ENCODE measurements at regions of chr1 and their contacts with region 1.

Region 1: DNA sequence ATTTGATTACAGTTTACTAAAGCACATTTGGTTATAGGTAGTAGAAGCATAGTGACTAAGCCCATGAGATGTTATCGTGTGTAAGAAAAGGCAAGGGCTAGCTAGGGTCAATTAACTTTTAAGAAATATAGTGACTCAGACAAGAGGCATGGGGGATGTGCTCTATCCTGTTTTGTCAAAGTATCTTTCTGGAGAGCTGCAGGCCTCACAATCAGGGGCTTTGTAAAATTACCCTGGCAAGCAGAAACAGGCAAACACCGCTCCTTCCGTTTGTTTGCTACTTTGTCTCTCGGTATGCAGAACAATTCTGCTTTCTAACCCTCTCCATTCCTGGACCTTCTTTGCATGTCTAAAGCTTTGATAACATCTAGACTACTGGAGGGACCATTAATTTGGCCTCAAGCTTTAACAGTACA is 26.1 kb upstream of the ZNF697 start:
- DNase-seq: no peak
- H3K4me3 ChIP-seq: no peak overlapping the region
- H3K27ac ChIP-seq: no peak overlapping the region
- H3K4me1 ChIP-seq: peaks cover 3 to 5% of the 10 kb centered on the region in 2 donors
- H3K27me3 ChIP-seq: no peaks in the 10 kb centered on the region
- CTCF ChIP-seq: no peak
- POLR2A ChIP-seq: no peak

Region 2: DNA sequence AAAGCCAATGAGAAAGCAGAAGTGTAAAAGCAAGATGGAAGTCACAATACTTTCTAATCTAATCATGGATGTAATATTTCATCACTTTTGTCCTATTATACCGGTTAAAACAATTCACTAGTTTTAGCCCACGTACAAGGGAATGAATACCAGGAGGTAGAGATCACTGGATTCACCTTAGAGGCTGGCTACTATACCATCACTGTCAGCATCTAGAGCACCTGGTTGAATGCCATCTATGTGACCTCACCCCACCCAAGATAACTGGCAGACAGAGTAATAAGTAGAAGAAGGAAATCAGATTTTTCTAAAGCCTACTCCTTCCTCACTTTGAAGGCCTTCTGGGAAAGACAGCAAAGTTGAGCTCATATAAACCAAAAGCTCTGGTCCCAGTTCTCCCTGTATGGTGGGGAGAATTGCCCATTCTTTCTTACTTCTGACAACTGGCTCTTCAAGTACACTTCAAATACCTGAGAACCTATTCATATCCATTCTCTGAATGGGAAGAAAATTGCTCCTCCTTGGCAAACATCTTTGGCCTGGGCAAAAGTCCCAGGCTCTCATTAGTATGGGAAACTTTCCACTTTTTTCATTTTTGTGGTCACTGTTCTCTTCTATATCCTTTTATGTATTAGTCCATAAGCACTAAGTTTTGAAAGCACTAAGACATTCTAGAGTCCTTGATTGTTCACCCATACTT is 142.3 kb before region 1 on chr1:
- intact Hi-C with region 1: no loop called
- DNase-seq: no peak
- H3K4me3 ChIP-seq: no peak overlapping the region
- H3K27ac ChIP-seq: no peak overlapping the region
- H3K4me1 ChIP-seq: no peaks in the 10 kb centered on the region
- H3K27me3 ChIP-seq: no peaks in the 10 kb centered on the region
- CTCF ChIP-seq: no peak
- POLR2A ChIP-seq: no peak

Region 3: GRCh38 chr1:119605686-119606085 is 68.4 kb before region 1 on chr1:
- intact Hi-C with region 1: no loop called
- DNase-seq: no peak
- H3K4me3 ChIP-seq: no peak overlapping the region
- H3K27ac ChIP-seq: no peak overlapping the region
- H3K4me1 ChIP-seq: peaks cover 4 to 6% of the 10 kb centered on the region in 2 donors
- H3K27me3 ChIP-seq: no peaks in the 10 kb centered on the region
- CTCF ChIP-seq: no peak
- POLR2A ChIP-seq: no peak

Region 4: DNA sequence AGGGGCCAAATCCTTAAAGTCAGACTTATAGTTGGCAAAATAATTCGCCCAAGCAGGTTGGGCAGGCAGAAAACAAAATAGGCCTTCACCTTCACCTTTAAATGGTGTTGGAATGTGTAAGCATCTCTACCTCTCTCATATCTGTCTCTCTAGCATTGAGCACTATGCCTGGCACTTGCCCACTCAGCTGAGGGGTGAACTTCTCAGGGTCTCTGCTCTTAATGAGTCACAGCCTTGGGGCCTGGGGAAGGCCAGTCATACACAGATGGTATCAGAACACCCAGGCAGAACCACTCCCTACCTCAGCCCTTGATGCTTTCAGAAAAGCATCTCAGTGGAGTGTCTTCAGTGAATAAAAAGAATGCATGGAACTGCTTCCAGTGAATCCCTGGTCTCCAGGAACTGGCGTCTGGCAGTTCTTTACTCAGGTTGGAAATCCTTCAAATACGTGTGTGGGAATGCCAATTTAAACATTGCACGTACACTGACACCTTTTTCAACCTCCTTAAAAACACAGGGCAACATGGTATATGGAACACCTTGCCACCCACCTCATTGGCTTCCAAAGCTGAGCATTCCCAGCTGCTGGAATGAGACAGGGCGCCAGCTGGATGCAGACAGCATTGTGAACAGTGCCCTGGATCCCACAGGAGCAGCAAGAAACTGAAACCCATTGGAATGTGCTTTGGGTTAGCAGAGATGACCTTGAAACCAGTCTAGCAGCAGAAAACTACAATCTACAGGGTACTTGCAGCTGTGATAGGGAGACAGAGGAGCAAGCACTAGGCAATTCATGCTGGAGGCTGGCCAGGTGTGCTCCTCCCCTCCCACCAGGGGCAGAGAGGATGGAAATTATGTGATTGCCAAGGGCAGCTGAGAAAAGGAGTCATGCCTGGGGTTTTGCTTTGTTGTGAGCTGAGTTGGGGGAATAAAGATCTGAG is 56.1 kb before region 1 on chr1:
- intact Hi-C with region 1: loop called (anchors 2 kb)
- DNase-seq: peak; percentile 60 to 68
- H3K4me3 ChIP-seq: no peak overlapping the region
- H3K27ac ChIP-seq: no peak overlapping the region
- H3K4me1 ChIP-seq: peaks cover 0 to 9% of the 10 kb centered on the region in 2 donors
- H3K27me3 ChIP-seq: no peaks in the 10 kb centered on the region
- CTCF ChIP-seq: no peak
- POLR2A ChIP-seq: no peak